ENCODE measurements at regions of chr17 and their contacts with region 1.

Region 1: GRCh38 chr17:7561028-7561575 is 617 bp upstream of the SENP3 start:
- DNase-seq: peak; percentile 91 to 96
- H3K4me3 ChIP-seq: peak overlapping the region; percentile 81 to 90 (median 89)
- H3K27ac ChIP-seq: peak overlapping the region; percentile 98 to 99
- H3K4me1 ChIP-seq: peaks cover 15 to 43% of the 10 kb centered on the region in 2 donors
- H3K27me3 ChIP-seq: no peaks in the 10 kb centered on the region
- CTCF ChIP-seq: peak; percentile 78 to 95 (median 90)
- POLR2A ChIP-seq: no peak

Region 2: DNA sequence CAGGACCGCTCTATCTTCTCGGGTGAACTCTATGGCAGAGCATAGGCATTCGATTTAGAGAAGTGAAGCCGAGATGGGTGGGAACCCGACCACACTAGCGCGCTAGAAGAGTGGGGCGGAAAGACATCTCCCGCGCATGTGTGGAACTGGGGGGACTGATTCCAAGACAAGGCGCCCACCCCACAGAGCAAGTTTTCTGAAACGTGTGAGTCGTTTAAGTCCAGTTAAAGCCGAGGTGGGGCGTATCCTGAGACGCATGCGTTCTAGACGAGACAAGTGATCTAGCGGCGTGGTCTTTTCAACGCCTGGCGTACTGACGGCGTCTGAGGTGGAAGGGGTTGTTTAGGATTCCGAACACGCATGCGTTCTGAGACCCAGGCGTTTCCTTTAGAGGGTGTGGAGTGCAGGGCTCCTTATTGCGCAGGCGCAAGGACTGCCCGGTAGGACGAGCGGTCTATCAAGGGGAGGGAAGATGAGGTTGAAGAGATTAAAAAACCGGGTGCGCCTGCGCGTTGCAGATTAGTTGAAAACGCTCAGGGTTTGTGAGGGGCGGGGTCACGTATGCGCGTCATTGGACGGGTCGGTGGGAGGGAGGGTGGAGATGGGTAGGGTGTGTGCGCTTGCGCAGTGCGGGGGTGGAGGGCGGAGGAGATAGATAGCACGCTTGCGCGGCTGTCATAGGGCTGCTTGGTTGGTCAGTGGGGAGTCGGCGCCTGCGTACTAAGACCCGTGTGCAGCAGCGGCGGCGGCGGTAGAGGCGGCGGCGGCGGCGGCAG is 254.0 kb before region 1 on chr17 and contains the start of gene EIF5A:
- intact Hi-C with region 1: loop called (anchors 5 kb)
- DNase-seq: peak; percentile 99 to 100
- H3K4me3 ChIP-seq: peak within 1 kb of the TSS; percentile 81 to 98 (median 98)
- H3K27ac ChIP-seq: peak within 1 kb of the TSS; percentile 98 to 99
- H3K4me1 ChIP-seq: peaks cover 5 to 19% of the 10 kb centered on the region in 2 donors
- H3K27me3 ChIP-seq: no peaks in the 10 kb centered on the region
- CTCF ChIP-seq: no peak
- POLR2A ChIP-seq: peak; percentile 64
- total RNA-seq, gene EIF5A: 151 to 172 (median 163) TPM

Region 3: GRCh38 chr17:7403977-7404736 is 156.9 kb before region 1 on chr17 and contains the start of gene TMEM256:
- intact Hi-C with region 1: no loop called
- DNase-seq: peak; percentile 99
- H3K4me3 ChIP-seq: peak within 1 kb of the TSS; percentile 57 to 89 (median 80)
- H3K27ac ChIP-seq: peak within 1 kb of the TSS; percentile 92 to 95
- H3K4me1 ChIP-seq: peaks cover 4 to 8% of the 10 kb centered on the region in 2 donors
- H3K27me3 ChIP-seq: no peaks in the 10 kb centered on the region
- CTCF ChIP-seq: peak in 1 of 3 donors; percentile 32
- POLR2A ChIP-seq: peak; percentile 79
- total RNA-seq, gene TMEM256: 77.6 to 113 (median 92.3) TPM

Region 4: GRCh38 chr17:7515911-7516610 is 45.0 kb before region 1 on chr17:
- intact Hi-C with region 1: loop called (anchors 10 kb)
- DNase-seq: no peak
- H3K4me3 ChIP-seq: no peak overlapping the region
- H3K27ac ChIP-seq: no peak overlapping the region
- H3K4me1 ChIP-seq: no peaks in the 10 kb centered on the region
- H3K27me3 ChIP-seq: no peaks in the 10 kb centered on the region
- CTCF ChIP-seq: no peak
- POLR2A ChIP-seq: no peak

Measured in breast epithelium (tissue), 4 donors.